Ascending aorta (tissue), 2 donors: ENCODE measurements at regions of chr15 and their contacts with region 1.

Region 1: DNA sequence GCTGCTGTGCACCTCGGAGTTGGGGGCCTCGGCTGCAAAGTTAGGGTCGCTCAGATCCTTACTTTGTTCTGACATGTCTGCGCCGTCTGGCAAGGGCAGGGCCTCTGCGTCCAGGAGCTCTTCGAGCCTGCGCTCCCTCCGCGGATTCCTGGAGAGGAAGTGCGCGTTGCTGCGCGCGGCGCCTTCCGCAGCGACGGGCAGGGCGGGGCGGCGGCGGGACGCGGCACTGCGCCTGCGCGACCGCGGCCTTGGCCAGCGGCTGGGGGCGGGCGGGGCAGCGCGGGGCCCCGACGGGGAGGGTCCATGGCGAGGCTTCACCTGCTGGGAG is at the start of gene NDN:
- DNase-seq: no peak
- H3K4me3 ChIP-seq: peak within 1 kb of the TSS; percentile 63 to 69
- H3K27ac ChIP-seq: no peak within 1 kb of the TSS
- H3K4me1 ChIP-seq: no peaks in the 10 kb centered on the region
- H3K27me3 ChIP-seq: no peaks in the 10 kb centered on the region
- CTCF ChIP-seq: no peak
- total RNA-seq, gene NDN: 132 TPM

Region 2: DNA sequence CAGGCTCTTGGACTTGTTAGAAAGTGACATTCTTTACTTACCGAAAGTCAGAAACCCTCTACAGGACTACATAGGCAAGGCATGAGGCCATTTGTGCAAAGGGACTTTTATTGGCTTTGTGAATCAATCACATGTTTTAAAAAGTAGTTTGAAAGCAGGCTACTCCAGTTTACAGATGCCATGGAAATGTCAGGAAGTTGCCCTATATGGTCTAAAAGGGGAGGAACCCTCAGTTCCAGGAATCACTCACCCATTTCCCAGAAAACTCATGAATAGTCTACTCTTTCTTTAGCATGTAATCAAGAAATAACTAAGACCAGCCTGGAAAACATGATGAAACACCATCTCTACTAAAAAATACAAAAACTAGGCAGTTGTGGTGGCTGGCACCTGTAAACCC is 172.6 kb before region 1 on chr15:
- intact Hi-C with region 1: no loop called
- DNase-seq: no peak
- H3K4me3 ChIP-seq: no peak overlapping the region
- H3K27ac ChIP-seq: no peak overlapping the region
- H3K4me1 ChIP-seq: no peaks in the 10 kb centered on the region
- H3K27me3 ChIP-seq: no peaks in the 10 kb centered on the region
- CTCF ChIP-seq: no peak

Region 3: GRCh38 chr15:23648920-23649515 is 38.1 kb before region 1 on chr15:
- intact Hi-C with region 1: loop called (anchors 5 kb)
- DNase-seq: no peak
- H3K4me3 ChIP-seq: no peak overlapping the region
- H3K27ac ChIP-seq: no peak overlapping the region
- H3K4me1 ChIP-seq: no peaks in the 10 kb centered on the region
- H3K27me3 ChIP-seq: no peaks in the 10 kb centered on the region
- CTCF ChIP-seq: peak in 2 of 3 experiments; percentile 26 to 31

Region 4: GRCh38 chr15:23734862-23735261 is 47.8 kb after region 1 on chr15:
- intact Hi-C with region 1: loop called (anchors 10 kb)
- DNase-seq: no peak
- H3K4me3 ChIP-seq: no peak overlapping the region
- H3K27ac ChIP-seq: no peak overlapping the region
- H3K4me1 ChIP-seq: no peaks in the 10 kb centered on the region
- H3K27me3 ChIP-seq: no peaks in the 10 kb centered on the region
- CTCF ChIP-seq: no peak

Region 5: GRCh38 chr15:23823508-23823907 is 136.4 kb after region 1 on chr15:
- intact Hi-C with region 1: no loop called
- DNase-seq: no peak
- H3K4me3 ChIP-seq: no peak overlapping the region
- H3K27ac ChIP-seq: no peak overlapping the region
- H3K4me1 ChIP-seq: no peaks in the 10 kb centered on the region
- H3K27me3 ChIP-seq: no peaks in the 10 kb centered on the region
- CTCF ChIP-seq: no peak